Caco-2 (cell line): ENCODE measurements at regions of chr11 and their contacts with region 1.

Region 1: GRCh38 chr11:62427630-62428233 is 8.9 kb downstream of the SCGB1A1 start:
- DNase-seq: no peak
- H3K4me3 ChIP-seq: no peak overlapping the region
- H3K4me3 Mint-ChIP-seq: no peak overlapping the region
- H3K27ac Mint-ChIP-seq: peak overlapping the region; percentile 91
- H3K4me1 ChIP-seq: peaks cover 75% of the 10 kb centered on the region
- H3K4me1 Mint-ChIP-seq: peaks cover 46% of the 10 kb centered on the region
- H3K27me3 ChIP-seq: no peaks in the 10 kb centered on the region
- H3K27me3 Mint-ChIP-seq: no peaks in the 10 kb centered on the region
- CTCF ChIP-seq: no peak

Region 2: GRCh38 chr11:62394825-62395538 is 32.8 kb before region 1 on chr11:
- CTCF ChIA-PET with region 1: interaction called, 32 read pairs
- POLR2A ChIA-PET with region 1: no interaction called
- intact Hi-C with region 1: loop called (anchors 2 kb)
- DNase-seq: peak; percentile 72 to 80
- H3K4me3 ChIP-seq: no peak overlapping the region
- H3K4me3 Mint-ChIP-seq: no peak overlapping the region
- H3K27ac Mint-ChIP-seq: peak overlapping the region; percentile 38
- H3K4me1 ChIP-seq: peaks cover 65% of the 10 kb centered on the region
- H3K4me1 Mint-ChIP-seq: peaks cover 32% of the 10 kb centered on the region
- H3K27me3 ChIP-seq: no peaks in the 10 kb centered on the region
- H3K27me3 Mint-ChIP-seq: no peaks in the 10 kb centered on the region
- CTCF ChIP-seq: peak; percentile 66 to 74

Region 3: GRCh38 chr11:62461740-62462507 is 34.2 kb after region 1 on chr11:
- CTCF ChIA-PET with region 1: interaction called, 28 read pairs
- POLR2A ChIA-PET with region 1: no interaction called
- intact Hi-C with region 1: loop called (anchors 5 kb)
- DNase-seq: no peak
- H3K4me3 ChIP-seq: no peak overlapping the region
- H3K4me3 Mint-ChIP-seq: no peak overlapping the region
- H3K27ac Mint-ChIP-seq: no peak overlapping the region
- H3K4me1 ChIP-seq: peaks cover 56% of the 10 kb centered on the region
- H3K4me1 Mint-ChIP-seq: peaks cover 46% of the 10 kb centered on the region
- H3K27me3 ChIP-seq: no peaks in the 10 kb centered on the region
- H3K27me3 Mint-ChIP-seq: no peaks in the 10 kb centered on the region
- CTCF ChIP-seq: no peak

Region 4: GRCh38 chr11:62497132-62497915 is 69.6 kb after region 1 on chr11:
- CTCF ChIA-PET with region 1: interaction called, 10 read pairs
- POLR2A ChIA-PET with region 1: interaction called, 3 read pairs
- intact Hi-C with region 1: no loop called
- DNase-seq: peak; percentile 75 to 82
- H3K4me3 ChIP-seq: no peak overlapping the region
- H3K4me3 Mint-ChIP-seq: no peak overlapping the region
- H3K27ac Mint-ChIP-seq: peak overlapping the region; percentile 76
- H3K4me1 ChIP-seq: peaks cover 48% of the 10 kb centered on the region
- H3K4me1 Mint-ChIP-seq: peaks cover 33% of the 10 kb centered on the region
- H3K27me3 ChIP-seq: no peaks in the 10 kb centered on the region
- H3K27me3 Mint-ChIP-seq: no peaks in the 10 kb centered on the region
- CTCF ChIP-seq: peak; percentile 59 to 68

Region 5: DNA sequence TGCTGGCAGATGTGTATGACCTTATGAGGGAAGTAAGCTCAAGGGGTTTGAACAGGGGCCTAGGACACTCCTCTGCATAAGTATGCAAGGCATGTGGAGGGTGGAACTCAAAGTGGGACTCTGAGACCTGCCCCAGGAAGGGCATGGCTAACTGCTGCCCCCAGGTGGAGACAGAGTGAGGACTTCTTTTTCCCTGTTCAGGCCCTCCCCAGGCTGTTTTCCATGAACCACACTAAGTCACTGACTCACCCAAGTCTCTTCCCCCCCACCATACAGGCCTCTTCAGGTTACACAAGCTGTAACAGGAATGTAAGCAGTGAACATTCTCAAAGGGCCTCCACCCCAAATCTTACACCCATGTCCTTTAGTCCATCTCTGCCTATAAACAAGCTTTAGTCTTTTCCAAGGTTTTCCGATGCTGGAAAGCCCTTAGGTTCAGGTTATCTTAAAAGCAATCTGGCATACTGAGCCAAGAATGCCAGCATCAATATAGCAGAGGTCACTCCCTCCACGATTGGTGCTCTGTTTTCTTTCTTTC is 132.9 kb after region 1 on chr11:
- CTCF ChIA-PET with region 1: interaction called, 38 read pairs
- POLR2A ChIA-PET with region 1: no interaction called
- intact Hi-C with region 1: loop called (anchors 1 kb)
- DNase-seq: peak; percentile 97 to 98
- H3K4me3 ChIP-seq: no peak overlapping the region
- H3K4me3 Mint-ChIP-seq: peak overlapping the region; percentile 50
- H3K27ac Mint-ChIP-seq: peak overlapping the region; percentile 71
- H3K4me1 ChIP-seq: peaks cover 74% of the 10 kb centered on the region
- H3K4me1 Mint-ChIP-seq: peaks cover 59% of the 10 kb centered on the region
- H3K27me3 ChIP-seq: no peaks in the 10 kb centered on the region
- H3K27me3 Mint-ChIP-seq: no peaks in the 10 kb centered on the region
- CTCF ChIP-seq: peak; percentile 91 to 94

Region 6: DNA sequence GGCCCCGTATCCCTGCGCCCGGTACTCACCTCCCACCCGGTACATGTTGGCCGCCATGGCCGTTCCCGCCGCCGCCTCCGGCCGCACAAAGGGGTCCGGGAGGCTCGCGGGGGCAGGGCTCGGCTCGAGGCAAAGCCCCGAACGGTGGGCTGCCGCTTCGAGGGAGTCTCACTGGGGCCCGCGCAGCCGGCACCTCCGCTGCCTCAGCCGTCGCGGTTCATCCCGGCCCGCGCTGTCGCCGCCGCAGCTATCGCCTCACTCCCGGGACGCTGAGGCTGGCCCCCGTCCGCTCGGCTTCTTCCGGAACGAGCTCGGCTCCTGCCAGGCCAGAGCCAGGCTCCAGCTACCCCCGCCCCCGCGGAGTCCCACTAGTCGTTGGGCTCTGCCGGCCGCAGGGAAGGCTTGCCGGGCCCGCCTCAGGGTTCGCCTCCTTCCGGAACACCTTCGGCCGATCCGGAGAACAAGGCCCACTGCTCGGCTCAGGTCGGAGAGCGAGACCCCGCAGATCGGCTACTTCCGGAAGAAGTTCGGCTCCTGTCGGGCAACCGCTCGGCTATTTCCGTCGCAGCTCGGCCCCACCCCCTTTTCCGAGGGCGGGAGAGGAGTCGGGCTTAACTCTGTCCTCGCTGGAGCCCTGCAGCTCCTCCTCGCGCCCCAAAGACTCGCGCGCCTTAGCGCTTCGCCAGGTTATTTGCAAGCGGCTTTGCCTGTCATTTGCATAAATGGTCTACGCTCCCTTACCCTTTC is 173.8 kb after region 1 on chr11 and contains the start of gene MTA2:
- CTCF ChIA-PET with region 1: interaction called, 3 read pairs
- POLR2A ChIA-PET with region 1: interaction called, 11 read pairs
- intact Hi-C with region 1: no loop called
- DNase-seq: peak; percentile 99 to 100
- H3K4me3 ChIP-seq: peak within 1 kb of the TSS; percentile 97
- H3K4me3 Mint-ChIP-seq: peak within 1 kb of the TSS; percentile 88
- H3K27ac Mint-ChIP-seq: peak within 1 kb of the TSS; percentile 89
- H3K4me1 ChIP-seq: peaks cover 35% of the 10 kb centered on the region
- H3K4me1 Mint-ChIP-seq: peaks cover 36% of the 10 kb centered on the region
- H3K27me3 ChIP-seq: no peaks in the 10 kb centered on the region
- H3K27me3 Mint-ChIP-seq: no peaks in the 10 kb centered on the region
- CTCF ChIP-seq: no peak
- total RNA-seq, gene MTA2: 134 and 135 TPM in 2 replicates